BJ (cell line): ENCODE measurements at regions of chr2 and their contacts with region 1.

Region 1: GRCh38 chr2:72236445-72237067 is 88.9 kb upstream of the CYP26B1 start:
- DNase-seq: no peak
- H3K4me3 ChIP-seq: no peak overlapping the region
- H3K27me3 ChIP-seq: no peaks in the 10 kb centered on the region
- CTCF ChIP-seq: no peak

Region 2: DNA sequence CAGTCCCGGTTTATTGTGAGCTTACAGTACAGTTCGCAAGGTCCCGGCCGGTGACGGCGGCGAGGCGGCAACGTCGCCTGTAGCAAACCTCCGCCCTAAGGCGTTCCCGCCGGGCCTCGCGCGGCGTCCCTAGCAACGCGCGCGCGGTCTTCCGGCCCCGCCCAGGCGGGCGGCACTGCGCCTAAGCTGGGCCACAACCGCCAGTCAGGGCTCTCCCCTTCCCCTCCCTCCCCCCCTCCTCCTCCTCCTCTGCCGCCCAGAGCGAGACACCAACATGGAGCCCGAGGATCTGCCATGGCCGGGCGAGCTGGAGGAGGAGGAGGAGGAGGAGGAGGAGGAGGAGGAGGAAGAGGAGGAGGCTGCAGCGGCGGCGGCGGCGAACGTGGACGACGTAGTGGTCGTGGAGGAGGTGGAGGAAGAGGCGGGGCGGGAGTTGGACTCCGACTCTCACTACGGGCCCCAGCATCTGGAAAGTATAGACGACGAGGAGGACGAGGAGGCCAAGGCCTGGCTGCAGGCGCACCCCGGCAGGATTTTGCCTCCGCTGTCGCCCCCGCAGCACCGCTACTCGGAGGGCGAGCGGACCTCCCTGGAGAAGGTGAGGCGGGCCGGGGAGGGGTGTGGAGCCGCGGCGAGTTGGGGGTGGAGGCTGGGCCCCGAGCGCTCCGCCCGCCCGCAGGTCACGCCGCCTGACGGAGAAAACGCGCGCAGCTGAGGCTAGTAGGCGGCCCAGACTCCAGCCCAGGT is 1149.2 kb after region 1 on chr2 and contains the start of gene ALMS1:
- CTCF ChIA-PET with region 1: no interaction called
- POLR2A ChIA-PET with region 1: interaction called, 10 read pairs
- DNase-seq: peak; percentile 61
- H3K4me3 ChIP-seq: peak within 1 kb of the TSS; percentile 91
- H3K27me3 ChIP-seq: peaks cover 1% of the 10 kb centered on the region; the same call in 1 of the 2 replicates
- CTCF ChIP-seq: peak; percentile 38; the same call in 1 of the 2 replicates
- polyA plus RNA-seq, gene ALMS1: 10.3 and 10.7 TPM in 2 replicates